H1 (cell line): ENCODE measurements at regions of chr20 and their contacts with region 1.

Region 1: DNA sequence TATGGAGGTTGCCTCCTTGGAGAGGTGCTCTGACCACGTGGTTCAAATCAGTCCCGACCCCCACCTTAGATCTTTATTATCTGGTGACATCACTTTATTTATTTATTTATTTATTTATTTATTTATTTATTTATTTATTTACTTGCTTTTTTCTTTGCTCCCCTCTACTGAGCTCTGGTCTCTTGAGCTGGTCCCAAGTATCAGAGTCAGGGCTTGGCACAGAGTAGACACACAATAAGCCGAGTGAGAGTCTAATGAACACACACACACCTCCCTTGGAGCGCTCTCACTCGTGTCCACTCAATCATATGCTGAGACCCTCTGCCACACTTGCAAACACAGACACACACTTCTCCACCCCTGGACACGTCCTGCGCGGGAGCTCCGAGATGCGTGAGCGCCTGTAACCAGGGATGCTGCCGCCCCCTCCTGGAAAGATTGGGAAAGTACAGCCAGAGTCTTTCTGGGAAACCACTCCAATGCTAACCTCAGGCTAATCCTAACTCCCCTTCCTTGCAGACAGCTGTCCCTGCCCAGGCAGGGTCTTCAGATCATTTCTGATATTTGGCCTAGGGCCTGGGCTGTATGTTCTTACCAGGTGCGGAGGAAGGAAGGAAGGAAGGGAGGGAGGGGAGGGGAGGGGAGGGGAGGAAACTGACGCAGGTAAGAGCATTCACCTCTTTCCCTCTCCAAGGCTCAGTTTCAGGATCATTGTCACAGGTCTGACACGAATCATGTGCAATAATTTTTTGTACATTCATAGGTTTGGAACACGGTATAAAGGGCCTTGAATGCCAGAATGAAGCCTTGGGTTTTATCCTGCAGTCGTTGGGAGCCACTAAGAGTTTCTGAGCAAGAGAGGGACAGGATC is 70.9 kb downstream of the STK35 start:
- DNase-seq: peak in 1 of 2 experiments; percentile 87
- H3K4me3 ChIP-seq: peak overlapping the region in 1 of 4 experiments; percentile 48; a peak in 1 of 8 replicates
- H3K27ac ChIP-seq: no peak overlapping the region
- H3K4me1 ChIP-seq: no peaks in the 10 kb centered on the region
- H3K27me3 ChIP-seq: no peaks in the 10 kb centered on the region; a peak in 1 of 7 replicates
- CTCF ChIP-seq: peak; percentile 80 to 93 (median 84)
- EP300 ChIP-seq: no peak
- POLR2A ChIP-seq: no peak
- RAD21 ChIP-seq: peak; percentile 95 to 97

Region 2: GRCh38 chr20:1965520-1966351 is 206.8 kb before region 1 on chr20:
- CTCF ChIA-PET with region 1: interaction called, 48 read pairs
- POLR2A ChIA-PET with region 1: no interaction called
- DNase-seq: peak; percentile 73 to 96
- H3K4me3 ChIP-seq: peak overlapping the region in 1 of 4 experiments; percentile 50; a peak in 4 of 8 replicates
- H3K27ac ChIP-seq: no peak overlapping the region
- H3K4me1 ChIP-seq: peaks cover 4 to 17% (median 11%) of the 10 kb centered on the region in 4 experiments; a peak in 6 of 7 replicates
- H3K27me3 ChIP-seq: peaks cover 0 to 4% (median 0%) of the 10 kb centered on the region in 4 experiments; a peak in 2 of 7 replicates
- CTCF ChIP-seq: peak; percentile 85 to 93 (median 91)
- EP300 ChIP-seq: peak in 1 of 2 experiments; percentile 20; a peak in 1 of 3 replicates
- POLR2A ChIP-seq: no peak
- RAD21 ChIP-seq: peak; percentile 93 to 95

Region 3: DNA sequence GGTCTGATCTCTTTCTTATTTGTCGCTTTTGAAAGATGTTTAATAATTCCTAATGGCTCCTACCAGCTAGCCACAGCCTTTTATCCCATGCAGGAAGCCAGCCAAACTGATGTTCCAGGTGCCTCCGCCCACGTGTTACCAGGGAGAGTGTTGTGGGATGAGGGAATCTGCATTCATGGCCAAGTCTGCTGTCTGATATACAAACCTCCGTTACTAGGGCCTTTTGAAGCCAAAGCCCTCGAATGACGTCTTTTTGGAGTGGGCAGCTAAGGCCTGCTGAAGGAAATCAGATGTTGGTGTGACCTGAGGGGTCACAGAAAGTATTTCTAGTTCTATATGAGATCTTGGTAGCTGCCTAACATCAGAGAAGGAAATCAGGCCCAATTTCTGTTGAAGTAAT is 49.6 kb before region 1 on chr20:
- CTCF ChIA-PET with region 1: interaction called, 14 read pairs
- POLR2A ChIA-PET with region 1: interaction called, 3 read pairs
- DNase-seq: no peak
- H3K4me3 ChIP-seq: no peak overlapping the region
- H3K27ac ChIP-seq: no peak overlapping the region
- H3K4me1 ChIP-seq: peaks cover 0 to 10% (median 0%) of the 10 kb centered on the region in 4 experiments; a peak in 1 of 7 replicates
- H3K27me3 ChIP-seq: no peaks in the 10 kb centered on the region
- CTCF ChIP-seq: no peak
- EP300 ChIP-seq: no peak
- POLR2A ChIP-seq: no peak
- RAD21 ChIP-seq: no peak

Region 4: GRCh38 chr20:2156666-2157624 is 15.6 kb before region 1 on chr20:
- CTCF ChIA-PET with region 1: interaction called, 12 read pairs
- POLR2A ChIA-PET with region 1: no interaction called
- DNase-seq: no peak
- H3K4me3 ChIP-seq: no peak overlapping the region
- H3K27ac ChIP-seq: no peak overlapping the region
- H3K4me1 ChIP-seq: no peaks in the 10 kb centered on the region
- H3K27me3 ChIP-seq: no peaks in the 10 kb centered on the region
- CTCF ChIP-seq: no peak
- EP300 ChIP-seq: no peak
- POLR2A ChIP-seq: no peak
- RAD21 ChIP-seq: no peak

Region 5: GRCh38 chr20:2183381-2183780 is 10.8 kb after region 1 on chr20:
- CTCF ChIA-PET with region 1: interaction called, 28 read pairs
- POLR2A ChIA-PET with region 1: no interaction called
- DNase-seq: no peak
- H3K4me3 ChIP-seq: no peak overlapping the region
- H3K27ac ChIP-seq: no peak overlapping the region
- H3K4me1 ChIP-seq: no peaks in the 10 kb centered on the region
- H3K27me3 ChIP-seq: no peaks in the 10 kb centered on the region; a peak in 1 of 7 replicates
- CTCF ChIP-seq: no peak
- EP300 ChIP-seq: no peak
- POLR2A ChIP-seq: no peak
- RAD21 ChIP-seq: no peak

Region 6: GRCh38 chr20:2840138-2840966 is 667.8 kb after region 1 on chr20 and contains the starts of genes PCED1A and VPS16:
- CTCF ChIA-PET with region 1: no interaction called
- POLR2A ChIA-PET with region 1: no interaction called
- DNase-seq: peak; percentile 49 to 93
- H3K4me3 ChIP-seq: peak within 1 kb of the TSS; percentile 64 to 93 (median 71)
- H3K27ac ChIP-seq: no peak within 1 kb of the TSS
- H3K4me1 ChIP-seq: no peaks in the 10 kb centered on the region; a peak in 1 of 7 replicates
- H3K27me3 ChIP-seq: peaks cover 5 to 20% (median 17%) of the 10 kb centered on the region in 4 experiments
- CTCF ChIP-seq: no peak
- EP300 ChIP-seq: no peak
- POLR2A ChIP-seq: peak in 1 of 2 experiments; percentile 59; a peak in 2 of 3 replicates
- RAD21 ChIP-seq: no peak
- total RNA-seq, gene PCED1A: 13.4 and 14.6 TPM in 2 replicates
- total RNA-seq, gene VPS16: 22.6 and 25.9 TPM in 2 replicates